Activated CD8-positive, alpha-beta memory T cell treated with anti-CD3 and anti-CD28 coated beads, Interleukin-2, amount 10 ng/mL, durations not matched to agents 7 days and 5 days (primary cell): ENCODE measurements at regions of chr5 and their contacts with region 1.

Region 1: DNA sequence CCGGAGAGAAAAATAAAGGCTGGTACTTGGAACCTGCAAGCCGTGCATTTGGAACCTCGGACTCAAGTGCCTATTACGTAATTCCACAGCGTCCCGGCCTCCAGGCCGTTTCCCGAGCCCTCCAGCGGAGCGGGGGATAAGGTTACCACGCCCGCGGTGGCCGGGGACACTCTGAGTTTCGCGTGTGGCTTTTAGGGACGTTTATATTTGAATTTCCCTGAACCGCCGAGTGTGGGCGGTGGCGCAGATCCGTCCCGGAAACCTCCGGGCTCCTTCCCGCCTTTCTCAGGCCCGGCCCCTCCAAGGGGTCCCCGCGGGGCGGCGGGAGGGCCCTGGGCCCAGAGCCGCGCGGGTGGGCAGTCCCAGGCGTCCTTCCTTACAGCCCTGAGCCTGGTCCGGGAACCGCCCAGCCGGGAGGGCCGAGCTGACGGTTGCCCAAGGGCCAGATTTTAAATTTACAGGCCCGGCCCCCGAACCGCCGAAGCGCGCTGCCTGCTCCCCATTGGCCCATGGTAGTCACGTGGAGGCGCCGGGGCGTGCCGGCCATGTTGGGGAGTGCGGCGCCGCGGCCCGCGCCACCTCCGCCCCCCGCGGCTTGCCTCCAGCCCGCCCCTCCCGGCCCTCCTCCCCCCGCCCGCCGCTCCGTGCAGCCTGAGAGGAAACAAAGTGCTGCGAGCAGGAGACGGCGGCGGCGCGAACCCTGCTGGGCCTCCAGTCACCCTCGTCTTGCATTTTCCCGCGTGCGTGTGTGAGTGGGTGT is at the start of gene LMNB1:
- DNase-seq: peak; percentile 97
- ATAC-seq: peak; percentile 70
- H3K4me3 Mint-ChIP-seq: peak within 1 kb of the TSS; percentile 91
- H3K27ac Mint-ChIP-seq: peak within 1 kb of the TSS; percentile 98
- H3K4me1 Mint-ChIP-seq: peaks cover 23% of the 10 kb centered on the region
- H3K27me3 Mint-ChIP-seq: no peaks in the 10 kb centered on the region
- total RNA-seq, gene LMNB1: 323 to 364 TPM

Region 2: DNA sequence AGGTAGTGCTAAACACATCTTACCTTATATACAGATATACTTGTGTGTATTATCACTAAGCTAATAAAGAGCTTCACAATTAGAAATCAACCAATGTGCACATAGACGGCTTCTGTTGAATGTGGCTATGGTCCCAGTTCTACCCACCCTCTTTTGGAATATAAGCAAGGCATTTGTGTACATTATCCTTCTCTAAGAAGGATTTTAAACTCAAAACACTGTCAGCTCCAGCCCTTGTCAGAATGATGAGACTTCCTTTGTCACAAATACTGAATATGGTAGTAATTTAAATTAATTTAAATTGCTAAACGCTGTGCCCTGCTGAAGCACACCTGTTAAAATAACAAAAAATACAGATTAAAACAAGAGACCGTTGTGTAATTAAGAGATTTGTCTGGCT is 461.3 kb before region 1 on chr5:
- CTCF ChIA-PET with region 1: no interaction called
- DNase-seq: no peak
- ATAC-seq: no peak
- H3K4me3 Mint-ChIP-seq: no peak overlapping the region
- H3K27ac Mint-ChIP-seq: no peak overlapping the region
- H3K4me1 Mint-ChIP-seq: no peaks in the 10 kb centered on the region
- H3K27me3 Mint-ChIP-seq: peaks cover 11% of the 10 kb centered on the region

Region 3: DNA sequence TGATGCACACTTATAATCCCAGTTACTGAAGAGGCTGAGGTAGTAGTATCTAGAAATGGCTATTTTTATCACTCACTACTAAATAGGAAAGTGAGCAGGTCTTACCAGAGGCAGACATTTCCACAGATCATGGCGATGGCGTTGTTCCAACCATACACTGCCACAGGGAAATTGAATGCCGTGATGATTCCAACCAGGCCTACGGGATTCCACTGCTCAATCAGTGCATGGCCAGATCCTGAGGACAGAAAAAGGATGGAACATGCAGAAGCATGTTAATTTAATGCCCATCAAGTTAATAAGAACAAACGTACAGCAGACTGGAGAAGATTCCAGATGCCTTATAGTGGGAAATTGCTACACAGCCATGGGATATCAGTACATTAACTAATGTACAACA is 199.7 kb before region 1 on chr5:
- CTCF ChIA-PET with region 1: no interaction called
- DNase-seq: no peak
- ATAC-seq: no peak
- H3K4me3 Mint-ChIP-seq: no peak overlapping the region
- H3K27ac Mint-ChIP-seq: no peak overlapping the region
- H3K4me1 Mint-ChIP-seq: no peaks in the 10 kb centered on the region
- H3K27me3 Mint-ChIP-seq: no peaks in the 10 kb centered on the region

Region 4: DNA sequence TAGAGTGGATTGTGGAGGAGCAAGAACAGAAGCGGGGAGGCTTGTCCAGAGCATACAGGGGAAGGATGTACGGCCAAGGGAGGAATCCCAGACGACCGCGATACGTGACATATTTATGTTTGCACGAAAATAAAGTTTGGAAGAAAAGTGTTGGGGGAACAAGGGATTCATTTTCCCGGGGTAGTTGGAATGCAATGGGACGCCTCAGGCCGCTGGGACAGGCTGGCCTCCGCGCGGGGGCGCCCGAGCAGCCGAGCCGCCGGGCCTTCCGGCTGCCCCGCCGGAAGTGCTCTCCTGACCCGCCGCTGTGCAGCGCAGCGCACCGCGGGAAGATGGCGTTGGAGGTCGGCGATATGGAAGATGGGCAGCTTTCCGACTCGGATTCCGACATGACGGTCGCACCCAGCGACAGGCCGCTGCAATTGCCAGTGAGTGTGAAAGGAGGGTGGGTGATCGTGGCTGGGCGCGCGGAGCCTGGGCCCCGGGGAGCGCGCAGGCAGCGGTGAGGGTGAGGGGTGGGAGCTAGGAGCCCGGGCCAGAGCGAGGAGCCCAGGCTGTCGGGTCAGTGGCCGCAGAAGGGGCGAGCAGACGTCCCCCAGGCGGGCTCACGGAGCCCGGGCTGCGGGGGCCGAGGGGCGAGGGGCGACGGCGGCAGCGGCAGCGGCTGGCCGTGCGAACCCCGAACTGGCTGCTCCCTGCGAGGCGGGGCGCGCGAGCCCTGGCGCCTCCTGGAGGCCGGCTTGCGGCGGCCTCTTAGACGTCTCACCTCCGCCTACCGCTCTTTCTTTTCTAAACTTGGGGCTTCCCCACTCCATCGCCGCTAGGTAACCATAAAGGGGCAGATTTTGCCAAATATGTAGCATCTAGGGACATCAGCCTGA is 175.8 kb before region 1 on chr5 and contains the start of gene PHAX:
- CTCF ChIA-PET with region 1: interaction called, 15 read pairs
- DNase-seq: peak; percentile 81
- ATAC-seq: peak; percentile 94
- H3K4me3 Mint-ChIP-seq: peak within 1 kb of the TSS; percentile 98
- H3K27ac Mint-ChIP-seq: peak within 1 kb of the TSS; percentile 94
- H3K4me1 Mint-ChIP-seq: peaks cover 32% of the 10 kb centered on the region
- H3K27me3 Mint-ChIP-seq: peaks cover 2% of the 10 kb centered on the region
- total RNA-seq, gene PHAX: 35.6 to 47.1 TPM

Region 5: GRCh38 chr5:126676195-126676624 is 100.5 kb before region 1 on chr5:
- CTCF ChIA-PET with region 1: interaction called, 251 read pairs
- DNase-seq: peak; percentile 81
- ATAC-seq: peak; percentile 88
- H3K4me3 Mint-ChIP-seq: no peak overlapping the region
- H3K27ac Mint-ChIP-seq: peak overlapping the region; percentile 50
- H3K4me1 Mint-ChIP-seq: peaks cover 24% of the 10 kb centered on the region
- H3K27me3 Mint-ChIP-seq: no peaks in the 10 kb centered on the region

Region 6: GRCh38 chr5:126736141-126736540 is 40.5 kb before region 1 on chr5:
- CTCF ChIA-PET with region 1: interaction called, 27 read pairs
- DNase-seq: no peak
- ATAC-seq: no peak
- H3K4me3 Mint-ChIP-seq: no peak overlapping the region
- H3K27ac Mint-ChIP-seq: no peak overlapping the region
- H3K4me1 Mint-ChIP-seq: peaks cover 5% of the 10 kb centered on the region
- H3K27me3 Mint-ChIP-seq: peaks cover 6% of the 10 kb centered on the region

Region 7: GRCh38 chr5:126753227-126753626 is 23.4 kb before region 1 on chr5:
- CTCF ChIA-PET with region 1: interaction called, 33 read pairs
- DNase-seq: no peak
- ATAC-seq: no peak
- H3K4me3 Mint-ChIP-seq: no peak overlapping the region
- H3K27ac Mint-ChIP-seq: no peak overlapping the region
- H3K4me1 Mint-ChIP-seq: peaks cover 42% of the 10 kb centered on the region
- H3K27me3 Mint-ChIP-seq: no peaks in the 10 kb centered on the region

Region 8: GRCh38 chr5:126794157-126794828 is 17.6 kb after region 1 on chr5:
- CTCF ChIA-PET with region 1: interaction called, 10 read pairs
- DNase-seq: no peak
- ATAC-seq: no peak
- H3K4me3 Mint-ChIP-seq: no peak overlapping the region
- H3K27ac Mint-ChIP-seq: peak overlapping the region; percentile 50
- H3K4me1 Mint-ChIP-seq: peaks cover 60% of the 10 kb centered on the region
- H3K27me3 Mint-ChIP-seq: no peaks in the 10 kb centered on the region

Region 9: GRCh38 chr5:126808521-126808988 is 31.9 kb after region 1 on chr5:
- CTCF ChIA-PET with region 1: interaction called, 25 read pairs
- DNase-seq: no peak
- ATAC-seq: no peak
- H3K4me3 Mint-ChIP-seq: no peak overlapping the region
- H3K27ac Mint-ChIP-seq: no peak overlapping the region
- H3K4me1 Mint-ChIP-seq: peaks cover 52% of the 10 kb centered on the region
- H3K27me3 Mint-ChIP-seq: no peaks in the 10 kb centered on the region